ENCODE measurements at regions of chr1 and their contacts with region 1.

Region 1: DNA sequence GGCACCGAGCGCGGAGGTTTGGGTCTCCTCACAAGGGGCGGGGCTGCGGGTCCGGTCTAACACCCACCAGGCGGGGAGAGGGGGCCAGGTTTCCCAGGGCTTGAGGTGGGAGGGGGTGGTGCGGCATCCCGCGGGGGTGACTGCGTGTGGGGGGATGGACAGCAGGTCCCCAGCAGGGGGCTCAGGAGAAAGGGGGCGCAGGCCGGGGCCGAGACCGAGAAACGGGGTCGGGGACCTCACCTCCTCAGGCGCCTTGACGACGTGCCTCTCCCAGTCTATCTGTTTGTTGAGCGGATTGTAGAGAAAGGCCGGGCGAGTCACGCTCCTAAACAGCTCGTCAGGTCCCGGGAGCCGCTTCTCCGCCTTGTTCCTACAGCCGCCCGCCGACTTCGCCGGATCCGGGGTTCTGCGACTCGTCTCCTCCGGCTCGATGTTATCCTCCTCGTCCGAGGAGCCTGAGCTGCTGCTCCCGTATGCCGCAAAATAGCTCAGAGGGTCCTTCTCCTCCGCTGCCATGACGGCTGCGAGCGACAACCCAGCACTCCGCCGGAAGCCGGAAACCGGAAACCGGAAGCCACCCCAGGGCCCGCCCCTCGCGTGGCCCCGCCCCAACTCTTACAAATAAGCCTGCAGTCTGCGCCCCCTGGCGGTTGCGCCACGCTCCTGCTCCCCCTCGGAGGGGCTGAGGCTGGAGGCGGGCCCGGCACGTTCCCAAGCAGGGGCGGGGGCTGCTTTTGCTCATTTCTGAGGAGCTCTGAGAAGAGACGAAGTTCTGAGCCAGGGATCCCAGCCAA is at the start of gene C1orf52:
- DNase-seq: peak; percentile 93 to 99 (median 96)
- ATAC-seq: peak; percentile 88 to 96 (median 90)
- H3K4me3 ChIP-seq: peak within 1 kb of the TSS; percentile 78 to 90 (median 78)
- H3K27ac ChIP-seq: peak within 1 kb of the TSS; percentile 28 to 73 (median 54)
- H3K4me1 ChIP-seq: peaks cover 35 to 38% (median 35%) of the 10 kb centered on the region in 3 donors
- H3K27me3 ChIP-seq: no peaks in the 10 kb centered on the region
- CTCF ChIP-seq: peak; percentile 99
- total RNA-seq, gene C1orf52: 8.0 to 12.8 (median 9.7) TPM

Region 2: GRCh38 chr1:84944767-84945486 is 314.4 kb before region 1 on chr1:
- intact Hi-C with region 1: loop called in 2 of 3 experiments (anchors 10 kb)
- DNase-seq: peak in 4 of 6 donors; percentile 33 to 83 (median 76)
- ATAC-seq: peak; percentile 96 to 99 (median 98)
- H3K4me3 ChIP-seq: peak overlapping the region in 3 of 4 donors; percentile 4 to 35 (median 32)
- H3K27ac ChIP-seq: peak overlapping the region in 3 of 4 donors; percentile 33 to 80 (median 74)
- H3K4me1 ChIP-seq: peaks cover 0 to 7% (median 0%) of the 10 kb centered on the region in 3 donors
- H3K27me3 ChIP-seq: no peaks in the 10 kb centered on the region
- CTCF ChIP-seq: peak; percentile 41 to 92 (median 80)

Region 3: DNA sequence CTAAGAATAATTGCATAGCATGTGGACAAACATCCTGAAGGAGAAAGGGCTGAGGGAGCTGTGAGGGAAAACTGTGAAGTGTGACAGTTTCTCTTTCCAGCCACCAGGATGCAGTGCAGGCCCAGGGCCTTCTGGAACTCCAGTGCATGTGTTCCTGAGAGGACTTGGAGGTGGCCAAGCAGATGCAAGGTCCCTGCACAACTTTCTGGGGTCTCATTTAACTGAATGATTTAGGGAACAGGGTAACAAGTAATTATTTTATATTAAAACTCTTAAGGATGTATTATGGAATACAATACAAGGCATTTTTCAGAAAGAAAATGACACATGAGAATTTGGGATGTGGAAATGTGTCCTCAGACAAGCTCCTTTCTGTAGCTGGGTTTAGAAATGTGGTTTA is 149.8 kb before region 1 on chr1:
- intact Hi-C with region 1: loop called in 1 of 3 experiments (anchors 5 kb)
- DNase-seq: peak; percentile 48 to 77 (median 59)
- ATAC-seq: peak; percentile 94 to 100 (median 99)
- H3K4me3 ChIP-seq: no peak overlapping the region
- H3K27ac ChIP-seq: no peak overlapping the region
- H3K4me1 ChIP-seq: no peaks in the 10 kb centered on the region
- H3K27me3 ChIP-seq: no peaks in the 10 kb centered on the region
- CTCF ChIP-seq: peak; percentile 64 to 88 (median 73)

Region 4: DNA sequence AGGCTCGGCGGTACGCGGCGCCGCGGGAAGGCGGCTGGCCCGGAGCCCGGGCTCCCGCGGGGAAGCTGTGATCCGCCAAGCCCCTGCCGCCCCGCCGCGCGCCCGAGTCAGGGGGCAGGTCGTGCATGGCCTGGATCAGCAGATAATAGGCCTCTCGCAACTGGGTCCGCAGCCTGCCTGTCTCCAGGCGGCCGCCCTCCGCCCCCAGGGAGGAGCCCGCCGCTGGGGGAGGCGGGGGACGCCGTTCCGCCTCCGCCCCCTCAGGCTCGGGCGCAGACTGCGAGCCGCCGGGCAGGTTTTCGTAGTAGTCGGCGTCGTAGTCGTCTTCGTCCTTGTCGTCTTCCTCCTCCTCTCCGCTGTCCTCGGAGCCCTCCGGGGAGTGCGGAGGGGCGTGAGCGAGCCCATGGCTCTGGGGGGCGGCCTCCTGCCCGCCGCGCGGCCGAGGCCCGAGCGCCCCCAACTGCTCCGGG is 58.4 kb before region 1 on chr1 and contains the start of gene SYDE2:
- intact Hi-C with region 1: loop called in 1 of 3 experiments (anchors 10 kb)
- DNase-seq: peak; percentile 81 to 92 (median 86)
- ATAC-seq: peak; percentile 87 to 92 (median 91)
- H3K4me3 ChIP-seq: peak within 1 kb of the TSS; percentile 60 to 94 (median 86)
- H3K27ac ChIP-seq: peak within 1 kb of the TSS; percentile 96 to 97 (median 97)
- H3K4me1 ChIP-seq: peaks cover 10 to 22% (median 14%) of the 10 kb centered on the region in 3 donors
- H3K27me3 ChIP-seq: no peaks in the 10 kb centered on the region
- CTCF ChIP-seq: no peak
- total RNA-seq, gene SYDE2: 4.9 to 6.6 (median 5.5) TPM

Measured in pancreas (tissue), 10 donors.